B cell (primary cell): ENCODE measurements at regions of chr6 and their contacts with region 1.

Region 1: GRCh38 chr6:28895134-28895812 is 28.5 kb downstream of the TRIM27 start:
- DNase-seq: peak; percentile 96
- ATAC-seq: peak; percentile 58
- H3K4me3 ChIP-seq: peak overlapping the region; percentile 73 to 86 (median 83)
- H3K4me3 Mint-ChIP-seq: peak overlapping the region; percentile 99
- H3K27ac ChIP-seq: peak overlapping the region; percentile 97
- H3K27ac Mint-ChIP-seq: peak overlapping the region; percentile 100
- H3K4me1 ChIP-seq: peaks cover 7 to 12% of the 10 kb centered on the region in 2 donors
- H3K4me1 Mint-ChIP-seq: peaks cover 21% of the 10 kb centered on the region
- H3K27me3 ChIP-seq: no peaks in the 10 kb centered on the region
- H3K27me3 Mint-ChIP-seq: peaks cover 4% of the 10 kb centered on the region
- CTCF ChIP-seq: no peak

Region 2: GRCh38 chr6:28923318-28924102 is 28.2 kb after region 1 on chr6 and contains the start of gene TRIM27:
- CTCF ChIA-PET with region 1: interaction called, 5 read pairs
- POLR2A ChIA-PET with region 1: interaction called, 41 read pairs
- intact Hi-C with region 1: loop called (anchors 1 kb)
- DNase-seq: peak; percentile 90
- ATAC-seq: peak; percentile 86
- H3K4me3 ChIP-seq: peak within 1 kb of the TSS; percentile 71 to 97 (median 92)
- H3K4me3 Mint-ChIP-seq: peak within 1 kb of the TSS; percentile 90
- H3K27ac ChIP-seq: peak within 1 kb of the TSS; percentile 81 to 83
- H3K27ac Mint-ChIP-seq: peak within 1 kb of the TSS; percentile 97
- H3K4me1 ChIP-seq: peaks cover 30% of the 10 kb centered on the region in 2 donors
- H3K4me1 Mint-ChIP-seq: peaks cover 34% of the 10 kb centered on the region
- H3K27me3 ChIP-seq: no peaks in the 10 kb centered on the region
- H3K27me3 Mint-ChIP-seq: no peaks in the 10 kb centered on the region
- CTCF ChIP-seq: peak; percentile 21
- total RNA-seq, gene TRIM27: 66.7 and 70.0 TPM in 2 replicates